Heart right ventricle (tissue), 16 donors: ENCODE measurements at regions of chr12 and their contacts with region 1.

Region 1: DNA sequence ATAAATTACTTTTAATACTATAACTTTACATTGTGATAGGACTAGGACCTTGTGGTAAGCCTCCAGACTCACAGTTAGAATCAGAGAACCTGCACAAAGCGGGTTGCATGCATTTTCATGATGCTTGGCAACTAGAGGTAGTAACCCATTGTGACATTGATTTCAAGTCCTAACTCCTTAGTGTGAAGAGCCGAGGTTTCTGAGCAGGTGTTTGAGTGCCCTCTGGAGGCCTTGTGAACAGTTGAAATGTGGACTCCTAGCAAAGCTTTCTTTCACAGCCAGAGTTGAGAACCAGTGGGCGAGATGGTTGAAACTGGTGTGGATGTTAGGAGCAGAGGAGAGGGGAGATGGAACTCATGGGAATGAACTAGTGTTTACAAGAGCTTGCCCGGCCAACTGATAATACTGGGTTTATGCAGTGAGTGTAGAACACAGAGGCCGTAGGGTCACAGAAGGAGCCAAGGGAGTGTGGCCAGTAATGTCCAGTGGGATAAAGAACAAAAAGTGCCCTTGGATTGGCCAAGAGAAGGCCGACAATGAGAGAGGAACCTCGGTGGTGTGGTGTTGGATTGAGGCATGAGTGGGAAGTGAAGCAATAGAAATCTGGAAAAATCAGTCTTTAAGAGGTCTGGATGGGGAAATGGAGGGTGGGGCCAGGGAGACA is 10.9 kb downstream of the ZNF664 start:
- DNase-seq: peak in 1 of 2 donors; percentile 47
- ATAC-seq: peak; percentile 38 to 89 (median 78)
- H3K4me3 ChIP-seq: no peak overlapping the region
- H3K27ac ChIP-seq: peak overlapping the region in 1 of 10 donors; percentile 17
- H3K4me1 ChIP-seq: peaks cover 10 to 72% (median 32%) of the 10 kb centered on the region in 9 donors
- H3K27me3 ChIP-seq: no peaks in the 10 kb centered on the region
- CTCF ChIP-seq: peak; percentile 34 to 79 (median 64)

Region 2: GRCh38 chr12:123801573-123802178 is 182.3 kb before region 1 on chr12:
- intact Hi-C with region 1: loop called in 3 of 10 experiments (anchors 10 kb)
- DNase-seq: no peak
- ATAC-seq: no peak
- H3K4me3 ChIP-seq: no peak overlapping the region
- H3K27ac ChIP-seq: no peak overlapping the region
- H3K4me1 ChIP-seq: no peaks in the 10 kb centered on the region
- H3K27me3 ChIP-seq: peaks cover 0 to 16% (median 6%) of the 10 kb centered on the region in 7 donors
- CTCF ChIP-seq: peak in 5 of 9 donors; percentile 10 to 41 (median 19)

Region 3: DNA sequence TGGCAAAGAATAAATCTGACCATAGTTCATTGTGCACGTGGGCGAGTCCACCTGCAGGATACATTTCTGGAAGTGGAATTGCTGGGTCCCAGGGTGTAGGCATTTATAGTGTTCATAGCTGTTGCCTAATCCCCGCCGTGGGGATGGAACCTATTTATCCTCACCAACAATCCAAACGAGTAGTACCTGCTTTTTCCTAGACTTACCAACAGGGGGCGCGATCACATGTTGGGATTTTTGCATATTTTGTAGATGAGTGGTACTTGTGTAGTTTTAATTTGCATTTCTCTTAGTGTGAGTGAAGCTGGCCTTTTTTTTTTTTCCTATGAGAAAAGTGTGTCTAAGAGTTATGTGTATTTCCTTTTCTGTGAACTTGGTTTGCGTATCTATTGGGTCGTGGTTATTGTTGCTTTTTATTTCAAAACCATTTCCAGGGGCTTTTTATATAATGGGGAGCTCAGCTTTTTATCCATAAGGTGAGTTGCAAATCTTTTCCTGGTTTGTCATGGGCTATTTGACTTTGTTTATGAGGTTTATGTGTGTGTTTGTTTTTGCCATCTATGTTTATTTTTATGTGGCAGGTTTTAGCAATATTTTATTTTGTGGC is 78.5 kb before region 1 on chr12:
- intact Hi-C with region 1: loop called in 9 of 10 experiments (anchors 1 to 10 kb)
- DNase-seq: peak in 1 of 2 donors; percentile 55
- ATAC-seq: no peak
- H3K4me3 ChIP-seq: no peak overlapping the region
- H3K27ac ChIP-seq: no peak overlapping the region
- H3K4me1 ChIP-seq: peaks cover 0 to 11% (median 3%) of the 10 kb centered on the region in 9 donors
- H3K27me3 ChIP-seq: peaks cover 0 to 20% (median 6%) of the 10 kb centered on the region in 7 donors
- CTCF ChIP-seq: peak; percentile 67 to 83 (median 77)

Region 4: GRCh38 chr12:123942238-123942653 is 41.7 kb before region 1 on chr12:
- intact Hi-C with region 1: no loop called
- DNase-seq: no peak
- ATAC-seq: no peak
- H3K4me3 ChIP-seq: no peak overlapping the region
- H3K27ac ChIP-seq: peak overlapping the region in 1 of 10 donors; percentile 47
- H3K4me1 ChIP-seq: peaks cover 0 to 25% (median 13%) of the 10 kb centered on the region in 9 donors
- H3K27me3 ChIP-seq: no peaks in the 10 kb centered on the region
- CTCF ChIP-seq: no peak

Region 5: DNA sequence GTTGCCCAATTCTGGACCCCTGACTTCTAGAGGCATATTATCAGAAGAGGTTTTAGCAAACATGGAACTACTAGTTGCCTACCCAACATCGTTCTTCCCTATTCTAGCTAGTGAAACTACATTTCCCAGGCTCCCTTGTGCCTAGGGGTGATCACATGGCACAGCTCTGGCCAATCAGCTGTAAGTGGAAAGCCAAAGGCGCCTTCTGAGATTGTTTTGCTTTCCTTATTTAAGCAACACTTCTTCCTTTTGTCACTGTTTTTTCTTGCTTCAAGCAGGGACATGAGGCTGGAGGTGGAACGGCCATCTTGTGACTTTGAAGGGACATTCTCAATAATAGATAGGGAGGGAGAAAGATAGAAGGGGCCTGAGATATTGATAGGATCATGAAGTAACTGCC is 125.8 kb after region 1 on chr12:
- intact Hi-C with region 1: no loop called
- DNase-seq: no peak
- ATAC-seq: no peak
- H3K4me3 ChIP-seq: no peak overlapping the region
- H3K27ac ChIP-seq: no peak overlapping the region
- H3K4me1 ChIP-seq: no peaks in the 10 kb centered on the region
- H3K27me3 ChIP-seq: no peaks in the 10 kb centered on the region
- CTCF ChIP-seq: no peak

Region 6: GRCh38 chr12:124713436-124714082 is 729.6 kb after region 1 on chr12:
- intact Hi-C with region 1: no loop called
- DNase-seq: peak in 1 of 2 donors; percentile 64
- ATAC-seq: peak; percentile 61 to 85 (median 77)
- H3K4me3 ChIP-seq: peak overlapping the region in 8 of 10 donors; percentile 13 to 45 (median 36)
- H3K27ac ChIP-seq: peak overlapping the region; percentile 57 to 96 (median 88)
- H3K4me1 ChIP-seq: peaks cover 0 to 49% (median 11%) of the 10 kb centered on the region in 9 donors
- H3K27me3 ChIP-seq: no peaks in the 10 kb centered on the region
- CTCF ChIP-seq: no peak